ENCODE measurements at regions of chr3 and their contacts with region 1.

Region 1: GRCh38 chr3:194344012-194344411 is 7.1 kb downstream of the CPN2 start:
- DNase-seq: peak; percentile 77
- ATAC-seq: peak; percentile 68 to 73
- H3K4me3 ChIP-seq: no peak overlapping the region
- H3K27ac ChIP-seq: no peak overlapping the region
- H3K4me1 ChIP-seq: no peaks in the 10 kb centered on the region
- H3K27me3 ChIP-seq: peaks cover 13% of the 10 kb centered on the region
- CTCF ChIP-seq: peak; percentile 93

Region 2: GRCh38 chr3:194395778-194396547 is 52.0 kb after region 1 on chr3:
- intact Hi-C with region 1: loop called (anchors 10 kb)
- DNase-seq: no peak
- ATAC-seq: peak; percentile 60 to 69
- H3K4me3 ChIP-seq: peak overlapping the region; percentile 39
- H3K27ac ChIP-seq: peak overlapping the region; percentile 31
- H3K4me1 ChIP-seq: peaks cover 29% of the 10 kb centered on the region
- H3K27me3 ChIP-seq: peaks cover 28% of the 10 kb centered on the region
- CTCF ChIP-seq: no peak

Region 3: GRCh38 chr3:194711913-194712312 is 367.9 kb after region 1 on chr3:
- intact Hi-C with region 1: no loop called
- DNase-seq: no peak
- ATAC-seq: no peak
- H3K4me3 ChIP-seq: no peak overlapping the region
- H3K27ac ChIP-seq: no peak overlapping the region
- H3K4me1 ChIP-seq: peaks cover 9% of the 10 kb centered on the region
- H3K27me3 ChIP-seq: no peaks in the 10 kb centered on the region
- CTCF ChIP-seq: no peak

Measured in lower lobe of right lung (tissue), 2 donors.